AG04450 (cell line): ENCODE measurements at regions of chr14 and their contacts with region 1.

Region 1: GRCh38 chr14:20413045-20413799 is at the start of gene TEP1:
- DNase-seq: peak; percentile 29
- H3K4me3 ChIP-seq: peak within 1 kb of the TSS; percentile 88
- H3K27ac ChIP-seq: peak within 1 kb of the TSS; percentile 94
- H3K27me3 ChIP-seq: no peaks in the 10 kb centered on the region
- CTCF ChIP-seq: no peak
- polyA plus RNA-seq, gene TEP1: 18.6 and 18.8 TPM in 2 replicates

Region 2: DNA sequence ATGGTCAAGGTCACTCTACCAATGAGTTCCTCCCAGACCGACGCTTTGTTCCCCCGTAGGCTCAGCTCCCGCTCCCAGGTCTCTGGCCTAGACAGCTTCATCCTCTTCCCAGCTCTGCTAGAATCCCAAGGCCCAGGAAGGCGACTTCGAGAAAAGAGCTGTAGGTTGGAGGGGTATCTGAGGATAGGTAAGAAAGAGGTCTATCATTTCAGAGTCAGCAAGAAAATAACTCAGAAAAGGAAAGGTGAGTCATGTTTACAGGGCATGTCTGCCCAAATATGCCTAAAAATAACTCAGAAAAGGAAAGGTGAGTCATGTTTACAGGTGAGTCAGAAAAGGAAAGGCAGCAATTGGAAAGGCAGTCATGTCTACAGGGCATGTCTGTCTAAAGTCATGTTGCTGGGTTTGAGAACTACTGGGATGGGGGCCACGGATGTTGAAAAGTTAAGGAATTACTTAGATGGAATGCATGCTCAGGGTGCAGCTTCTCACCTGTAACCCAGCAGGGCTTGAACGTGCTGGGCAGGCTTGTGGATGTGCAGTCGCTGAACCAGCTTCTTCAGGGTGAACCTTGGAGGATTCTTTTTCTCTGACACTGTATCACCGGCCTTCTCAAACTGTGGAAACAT is 12.1 kb before region 1 on chr14:
- CTCF ChIA-PET with region 1: interaction called, 49 read pairs
- POLR2A ChIA-PET with region 1: no interaction called
- DNase-seq: no peak
- H3K4me3 ChIP-seq: no peak overlapping the region
- H3K27ac ChIP-seq: no peak overlapping the region
- H3K27me3 ChIP-seq: no peaks in the 10 kb centered on the region
- CTCF ChIP-seq: no peak

Region 3: DNA sequence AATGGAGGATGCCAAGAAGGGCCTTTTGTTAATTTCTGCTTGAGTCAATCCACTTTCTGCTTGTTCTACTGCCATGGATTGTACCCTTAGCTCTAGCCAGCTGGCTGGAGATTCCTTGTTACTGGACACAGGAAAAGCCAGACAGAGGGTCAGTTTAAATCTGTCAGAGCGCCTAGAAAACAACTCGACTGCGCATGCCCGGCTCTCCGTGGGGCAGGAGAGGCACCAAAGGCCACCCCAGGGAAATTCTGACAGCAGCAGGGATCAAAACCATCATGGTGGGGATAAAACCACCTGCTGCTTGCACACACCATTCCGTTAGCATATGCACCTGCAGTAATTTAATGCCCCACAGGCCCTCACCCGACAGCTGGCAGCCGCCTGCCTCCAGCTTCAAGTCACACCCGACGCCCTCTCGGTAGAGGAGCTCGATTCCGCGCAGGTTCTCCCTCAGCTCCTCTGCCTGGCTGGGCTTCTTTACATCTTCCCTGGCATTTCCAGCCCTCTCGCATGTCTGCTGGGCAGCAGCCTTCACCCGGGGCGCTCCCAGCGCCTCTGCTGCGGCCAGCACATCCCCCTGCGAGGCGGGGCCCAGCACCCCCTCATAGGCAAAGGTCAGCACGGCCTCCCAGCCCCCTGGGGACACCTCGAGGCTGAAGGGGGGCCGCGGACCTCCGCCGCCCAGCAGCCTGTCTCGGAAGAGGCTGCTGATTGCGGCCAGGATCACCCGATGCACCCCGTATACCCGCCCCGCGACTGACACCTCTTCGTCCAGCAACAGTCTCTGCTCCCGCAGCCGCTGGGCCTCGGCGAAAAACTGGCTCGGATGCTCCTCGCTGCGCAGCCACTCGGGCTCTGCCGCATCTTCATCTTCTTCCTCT is 21.7 kb after region 1 on chr14:
- CTCF ChIA-PET with region 1: interaction called, 22 read pairs
- POLR2A ChIA-PET with region 1: interaction called, 3 read pairs
- DNase-seq: no peak
- H3K4me3 ChIP-seq: no peak overlapping the region
- H3K27ac ChIP-seq: no peak overlapping the region
- H3K27me3 ChIP-seq: peaks cover 3% of the 10 kb centered on the region
- CTCF ChIP-seq: no peak

Region 4: DNA sequence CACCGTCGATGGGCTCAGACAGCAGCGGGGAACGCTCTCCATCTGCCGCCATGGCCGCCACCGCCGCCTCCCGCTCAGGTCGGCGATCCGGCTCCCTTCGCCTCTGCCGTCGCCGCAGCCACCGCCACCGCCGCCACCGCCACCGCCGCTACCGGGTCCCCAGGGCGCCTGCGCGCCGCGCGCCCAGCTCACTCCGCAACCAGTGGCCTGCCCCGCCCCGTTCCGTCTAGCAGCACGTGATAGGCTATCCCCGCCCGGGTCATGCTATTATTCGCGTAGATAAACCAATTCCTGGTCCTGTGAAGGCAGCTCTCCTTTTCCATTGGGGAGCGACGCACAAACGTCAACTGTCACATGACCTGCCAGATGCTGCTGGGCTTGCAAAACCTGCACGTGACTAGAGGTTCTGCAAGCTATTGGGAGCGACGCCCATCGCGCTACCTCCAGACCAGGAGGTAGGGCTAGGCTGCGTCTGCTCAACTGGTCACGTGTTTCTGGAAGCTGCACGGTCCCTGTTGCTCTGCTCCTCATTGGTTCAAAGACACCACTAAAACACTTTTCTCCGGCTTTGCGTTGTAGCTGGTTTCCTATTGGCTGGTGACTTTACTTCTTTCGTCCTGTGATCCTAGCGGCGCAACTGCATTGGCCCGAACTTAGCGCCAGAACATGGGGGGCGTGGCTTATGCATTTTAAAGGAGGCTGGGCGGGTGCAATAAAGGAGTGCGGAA is 48.2 kb after region 1 on chr14 and contains the start of gene PIP4P1:
- CTCF ChIA-PET with region 1: interaction called, 11 read pairs
- POLR2A ChIA-PET with region 1: no interaction called
- DNase-seq: peak; percentile 100
- H3K4me3 ChIP-seq: peak within 1 kb of the TSS; percentile 94
- H3K27ac ChIP-seq: peak within 1 kb of the TSS; percentile 78
- H3K27me3 ChIP-seq: no peaks in the 10 kb centered on the region
- CTCF ChIP-seq: no peak
- polyA plus RNA-seq, gene PIP4P1: 24.5 and 29.9 TPM in 2 replicates

Region 5: DNA sequence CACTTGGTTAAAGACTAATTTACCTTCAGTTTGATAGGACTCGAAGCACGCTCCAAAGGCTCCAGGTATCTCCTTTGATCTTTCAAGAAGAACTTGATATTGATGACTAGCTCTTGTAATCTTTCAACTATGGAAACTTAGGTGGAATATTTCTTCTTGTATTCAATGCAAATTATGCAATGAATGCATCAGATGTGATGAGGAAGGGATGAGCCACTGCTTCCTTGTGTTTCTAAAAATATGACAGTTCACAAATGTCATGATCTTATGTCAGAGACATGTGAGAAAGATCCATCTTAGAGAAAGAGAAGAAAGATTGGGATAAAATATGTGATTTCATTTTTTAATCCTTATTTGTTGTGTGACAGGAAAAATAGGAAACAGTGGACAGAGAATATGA is 137.7 kb after region 1 on chr14:
- CTCF ChIA-PET with region 1: no interaction called
- POLR2A ChIA-PET with region 1: no interaction called
- DNase-seq: no peak
- H3K4me3 ChIP-seq: no peak overlapping the region
- H3K27ac ChIP-seq: no peak overlapping the region
- H3K27me3 ChIP-seq: peaks cover 8% of the 10 kb centered on the region
- CTCF ChIP-seq: no peak